ENCODE measurements at regions of chr5 and their contacts with region 1.

Region 1: DNA sequence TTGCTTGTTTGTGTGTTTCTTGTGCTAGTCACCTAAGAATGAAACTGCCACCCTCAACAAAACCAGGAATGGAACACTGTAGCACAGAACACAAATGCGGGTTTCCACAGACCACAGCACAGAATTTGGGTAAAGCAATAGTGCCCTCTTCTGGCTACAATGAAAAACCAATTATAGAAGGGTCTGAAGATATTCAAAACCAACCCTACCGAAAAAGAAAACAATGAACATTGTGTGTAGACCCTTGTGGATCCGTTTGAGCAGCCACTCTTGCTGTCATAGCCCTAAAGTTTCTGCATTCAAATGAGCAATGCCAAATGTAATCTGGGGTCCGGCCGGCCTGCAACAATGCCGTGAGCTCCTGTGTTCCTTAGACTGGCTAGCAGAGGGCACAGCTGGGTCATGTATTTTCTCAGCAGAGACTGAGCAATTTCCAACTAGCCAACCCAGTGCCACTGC is 8.3 kb upstream of the ENC1 start:
- DNase-seq: no peak
- ATAC-seq: peak; percentile 87

Region 2: DNA sequence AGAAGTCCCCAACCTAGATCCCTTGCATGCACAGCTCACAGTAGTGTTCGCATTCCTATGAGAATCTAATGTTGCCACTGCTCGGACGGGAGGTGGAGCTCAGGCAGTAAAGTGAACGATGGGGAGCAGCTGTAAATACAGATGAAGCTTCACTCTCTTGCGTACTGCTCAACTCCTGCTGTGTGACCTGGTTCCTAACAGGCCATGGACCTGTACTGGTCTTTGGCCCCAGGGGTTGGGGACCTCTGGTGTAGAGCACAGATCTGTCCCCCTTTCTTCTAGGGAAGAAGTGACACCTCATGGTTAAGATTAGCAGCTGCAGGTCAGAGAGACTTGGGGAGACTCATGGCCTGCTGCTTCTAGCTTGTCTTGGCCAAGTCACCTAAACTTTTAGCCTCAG is 1015.8 kb before region 1 on chr5:
- intact Hi-C with region 1: no loop called
- DNase-seq: no peak
- ATAC-seq: no peak

Region 3: DNA sequence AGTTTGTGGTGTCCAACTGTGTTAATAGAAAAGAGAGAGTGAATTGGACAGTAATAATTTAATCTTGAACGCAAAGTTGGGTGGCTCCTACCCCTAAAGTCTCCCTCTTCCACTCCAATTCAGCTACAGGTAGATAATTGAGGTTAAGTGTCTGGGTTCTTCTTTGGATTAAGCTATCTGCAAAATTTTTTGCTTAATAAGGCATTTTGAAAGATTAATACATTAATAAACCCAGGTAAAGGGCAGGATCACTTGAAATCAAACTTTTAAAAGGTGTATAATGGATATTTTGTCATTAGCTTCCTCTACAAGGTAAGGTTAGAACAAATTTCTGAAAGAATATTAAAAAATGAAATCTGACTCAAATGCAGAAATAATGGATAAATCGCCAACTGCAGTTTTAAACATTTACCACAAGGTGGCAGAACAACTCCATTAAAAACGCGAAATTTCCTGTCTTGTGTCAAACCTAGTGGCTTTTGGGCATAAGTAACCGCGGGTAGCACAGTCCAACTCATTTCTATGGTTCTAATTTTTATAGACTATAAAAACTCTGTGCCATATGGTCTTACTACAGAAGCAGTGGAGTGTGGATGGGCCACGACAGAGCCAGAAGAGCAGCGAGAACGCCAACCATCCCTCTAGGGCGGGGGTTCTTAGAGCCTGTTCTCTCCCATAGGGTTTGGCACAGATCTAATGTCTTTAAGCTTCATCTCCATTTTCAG is 746.4 kb before region 1 on chr5:
- intact Hi-C with region 1: loop called (anchors 2 to 10 kb)
- DNase-seq: no peak
- ATAC-seq: peak; percentile 60

Measured in left colon (tissue), 2 donors.